ENCODE measurements at regions of chr12 and their contacts with region 1.

Region 1: GRCh38 chr12:12562585-12563261 is at the start of gene DUSP16:
- DNase-seq: peak; percentile 85
- H3K4me3 Mint-ChIP-seq: peak within 1 kb of the TSS; percentile 78
- H3K27ac Mint-ChIP-seq: peak within 1 kb of the TSS; percentile 90
- H3K4me1 Mint-ChIP-seq: peaks cover 29% of the 10 kb centered on the region
- H3K27me3 Mint-ChIP-seq: no peaks in the 10 kb centered on the region
- total RNA-seq, gene DUSP16: 45.7 to 47.2 TPM

Region 2: GRCh38 chr12:12376646-12377448 is 185.9 kb before region 1 on chr12:
- CTCF ChIA-PET with region 1: interaction called, 32 read pairs
- intact Hi-C with region 1: loop called (anchors 1 kb)
- DNase-seq: peak; percentile 33
- H3K4me3 Mint-ChIP-seq: no peak overlapping the region
- H3K27ac Mint-ChIP-seq: peak overlapping the region; percentile 30
- H3K4me1 Mint-ChIP-seq: peaks cover 37% of the 10 kb centered on the region
- H3K27me3 Mint-ChIP-seq: no peaks in the 10 kb centered on the region

Region 3: GRCh38 chr12:12474931-12475795 is 87.6 kb before region 1 on chr12:
- CTCF ChIA-PET with region 1: no interaction called
- intact Hi-C with region 1: loop called (anchors 1 kb)
- DNase-seq: peak; percentile 71
- H3K4me3 Mint-ChIP-seq: peak overlapping the region; percentile 19
- H3K27ac Mint-ChIP-seq: peak overlapping the region; percentile 95
- H3K4me1 Mint-ChIP-seq: peaks cover 52% of the 10 kb centered on the region
- H3K27me3 Mint-ChIP-seq: no peaks in the 10 kb centered on the region

Region 4: GRCh38 chr12:12511895-12512711 is 50.6 kb before region 1 on chr12:
- CTCF ChIA-PET with region 1: interaction called, 3 read pairs
- intact Hi-C with region 1: loop called (anchors 1 kb)
- DNase-seq: peak; percentile 63
- H3K4me3 Mint-ChIP-seq: no peak overlapping the region
- H3K27ac Mint-ChIP-seq: no peak overlapping the region
- H3K4me1 Mint-ChIP-seq: peaks cover 26% of the 10 kb centered on the region
- H3K27me3 Mint-ChIP-seq: no peaks in the 10 kb centered on the region

Region 5: GRCh38 chr12:12661086-12661485 is 98.4 kb after region 1 on chr12:
- CTCF ChIA-PET with region 1: no interaction called
- intact Hi-C with region 1: loop called (anchors 1 kb)
- DNase-seq: no peak
- H3K4me3 Mint-ChIP-seq: no peak overlapping the region
- H3K27ac Mint-ChIP-seq: no peak overlapping the region
- H3K4me1 Mint-ChIP-seq: peaks cover under 1% of the 10 kb centered on the region
- H3K27me3 Mint-ChIP-seq: no peaks in the 10 kb centered on the region

Region 6: GRCh38 chr12:12716793-12717585 is 154.3 kb after region 1 on chr12 and contains the start of gene CDKN1B:
- CTCF ChIA-PET with region 1: no interaction called
- intact Hi-C with region 1: loop called (anchors 1 kb)
- DNase-seq: peak; percentile 90
- H3K4me3 Mint-ChIP-seq: peak within 1 kb of the TSS; percentile 98
- H3K27ac Mint-ChIP-seq: peak within 1 kb of the TSS; percentile 98
- H3K4me1 Mint-ChIP-seq: peaks cover 55% of the 10 kb centered on the region
- H3K27me3 Mint-ChIP-seq: no peaks in the 10 kb centered on the region
- total RNA-seq, gene CDKN1B: 35.9 to 39.1 TPM